CD14-positive monocyte (primary cell): ENCODE measurements at regions of chr2 and their contacts with region 1.

Region 1: GRCh38 chr2:112584134-112584890 is at the start of gene CHCHD5:
- DNase-seq: peak; percentile 95 to 98 (median 98)
- H3K4me3 ChIP-seq: peak within 1 kb of the TSS; percentile 44 to 80 (median 70)
- H3K4me3 Mint-ChIP-seq: peak within 1 kb of the TSS; percentile 92 to 97
- H3K27ac ChIP-seq: peak within 1 kb of the TSS; percentile 89 to 99
- H3K27ac Mint-ChIP-seq: peak within 1 kb of the TSS; percentile 97 to 100 (median 99)
- H3K4me1 ChIP-seq: peaks cover 24 to 27% of the 10 kb centered on the region in 2 donors
- H3K4me1 Mint-ChIP-seq: peaks cover 44% of the 10 kb centered on the region
- H3K27me3 ChIP-seq: no peaks in the 10 kb centered on the region
- H3K27me3 Mint-ChIP-seq: peaks cover 0 to 3% (median 0%) of the 10 kb centered on the region in 3 donors
- CTCF ChIP-seq: no peak
- polyA plus RNA-seq, gene CHCHD5: 37.1 to 77.3 (median 56.2) TPM

Region 2: GRCh38 chr2:112481050-112481527 is 103.2 kb before region 1 on chr2:
- intact Hi-C with region 1: loop called in 1 of 2 experiments (anchors 5 kb)
- DNase-seq: peak; percentile 67 to 74 (median 69)
- H3K4me3 ChIP-seq: peak overlapping the region; percentile 59 to 90 (median 68)
- H3K4me3 Mint-ChIP-seq: peak overlapping the region; percentile 99
- H3K27ac ChIP-seq: peak overlapping the region; percentile 80 to 89
- H3K27ac Mint-ChIP-seq: peak overlapping the region; percentile 91 to 98 (median 96)
- H3K4me1 ChIP-seq: peaks cover 21 to 31% of the 10 kb centered on the region in 2 donors
- H3K4me1 Mint-ChIP-seq: peaks cover 32% of the 10 kb centered on the region
- H3K27me3 ChIP-seq: no peaks in the 10 kb centered on the region
- H3K27me3 Mint-ChIP-seq: peaks cover 0 to 5% (median 3%) of the 10 kb centered on the region in 3 donors
- CTCF ChIP-seq: peak; percentile 82

Region 3: DNA sequence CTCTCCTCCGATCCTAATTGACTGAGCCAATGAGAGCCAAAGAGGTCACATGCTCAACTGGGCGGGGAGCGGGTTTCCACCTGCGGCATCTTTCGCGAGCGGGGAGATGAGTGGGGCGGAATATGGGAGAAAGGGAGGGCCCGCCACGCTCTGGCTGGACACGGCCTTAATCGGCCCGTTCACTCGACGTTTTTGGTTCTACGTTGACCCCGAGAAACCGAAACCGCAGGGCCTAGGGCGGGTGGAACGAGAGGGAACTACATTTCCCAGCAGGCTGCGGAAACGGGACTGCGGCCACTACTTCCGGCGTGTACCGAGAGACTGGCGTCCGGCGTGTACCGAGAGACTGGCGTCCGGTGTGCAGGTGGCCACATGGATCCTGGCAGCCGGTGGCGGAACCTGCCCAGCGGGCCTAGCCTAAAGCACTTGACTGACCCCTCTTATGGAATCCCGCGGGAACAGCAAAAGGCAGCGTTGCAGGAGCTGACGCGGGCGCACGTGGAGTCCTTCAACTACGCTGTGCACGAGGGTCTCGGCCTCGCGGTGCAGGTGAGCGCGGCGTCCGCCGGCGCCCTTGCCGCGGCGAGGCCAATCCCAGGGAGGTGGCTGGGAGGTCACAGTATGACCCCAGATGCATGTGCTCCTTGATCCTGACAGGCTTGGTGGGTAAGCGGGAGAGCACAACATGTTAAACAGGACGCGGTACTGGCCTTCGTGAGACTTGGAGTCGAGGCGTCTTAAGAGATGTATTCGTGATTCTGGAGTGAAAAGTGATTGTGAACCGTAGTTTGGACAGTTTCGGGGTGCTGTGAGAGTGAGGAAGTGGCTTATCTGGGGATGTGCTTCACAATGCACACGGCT is 42.0 kb before region 1 on chr2 and contains the start of gene POLR1B:
- intact Hi-C with region 1: loop called in 1 of 2 experiments (anchors 2 kb)
- DNase-seq: peak; percentile 70 to 71 (median 71)
- H3K4me3 ChIP-seq: peak within 1 kb of the TSS; percentile 60 to 95 (median 94)
- H3K4me3 Mint-ChIP-seq: no peak within 1 kb of the TSS
- H3K27ac ChIP-seq: peak within 1 kb of the TSS; percentile 93 to 95
- H3K27ac Mint-ChIP-seq: peak within 1 kb of the TSS in 1 of 7 donors; percentile 99
- H3K4me1 ChIP-seq: peaks cover 21 to 27% of the 10 kb centered on the region in 2 donors
- H3K4me1 Mint-ChIP-seq: peaks cover 13% of the 10 kb centered on the region
- H3K27me3 ChIP-seq: no peaks in the 10 kb centered on the region
- H3K27me3 Mint-ChIP-seq: peaks cover 0 to 4% (median 0%) of the 10 kb centered on the region in 3 donors
- CTCF ChIP-seq: no peak
- polyA plus RNA-seq, gene POLR1B: 5.2 to 6.3 (median 5.3) TPM

Region 4: GRCh38 chr2:112606488-112606902 is 22.2 kb after region 1 on chr2:
- intact Hi-C with region 1: no loop called
- DNase-seq: no peak
- H3K4me3 ChIP-seq: no peak overlapping the region
- H3K4me3 Mint-ChIP-seq: no peak overlapping the region
- H3K27ac ChIP-seq: no peak overlapping the region
- H3K27ac Mint-ChIP-seq: no peak overlapping the region
- H3K4me1 ChIP-seq: no peaks in the 10 kb centered on the region
- H3K4me1 Mint-ChIP-seq: no peaks in the 10 kb centered on the region
- H3K27me3 ChIP-seq: no peaks in the 10 kb centered on the region
- H3K27me3 Mint-ChIP-seq: peaks cover 0 to 2% (median 0%) of the 10 kb centered on the region in 3 donors
- CTCF ChIP-seq: no peak

Region 5: DNA sequence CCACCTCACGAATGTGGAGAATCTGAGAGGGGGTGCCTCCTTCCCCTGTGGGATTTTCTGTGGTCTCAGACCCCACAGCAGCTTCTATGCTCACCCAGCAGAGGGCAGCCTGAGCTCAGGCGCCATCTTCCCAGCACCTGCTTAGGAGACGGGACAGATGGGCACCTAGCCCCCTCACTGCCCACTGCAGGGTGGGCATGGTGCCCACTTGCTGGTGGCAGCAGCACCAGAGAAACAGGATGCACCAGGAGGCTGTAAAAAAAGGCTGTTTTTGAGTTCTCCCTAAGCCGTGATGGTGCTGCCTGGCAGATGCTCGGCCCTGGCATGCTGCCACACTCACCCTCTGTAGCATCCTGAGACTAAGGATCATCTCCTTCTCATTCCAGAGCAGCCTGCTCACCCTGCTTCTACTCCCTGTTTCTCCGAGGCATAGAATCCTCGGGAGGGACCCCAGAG is 42.3 kb after region 1 on chr2:
- intact Hi-C with region 1: no loop called
- DNase-seq: peak in 2 of 3 donors; percentile 53 to 55
- H3K4me3 ChIP-seq: peak overlapping the region in 1 of 3 experiments; percentile 62
- H3K4me3 Mint-ChIP-seq: peak overlapping the region; percentile 59 to 71
- H3K27ac ChIP-seq: peak overlapping the region; percentile 70 to 89
- H3K27ac Mint-ChIP-seq: peak overlapping the region; percentile 79 to 96 (median 90)
- H3K4me1 ChIP-seq: peaks cover 79 to 91% of the 10 kb centered on the region in 2 donors
- H3K4me1 Mint-ChIP-seq: peaks cover 83% of the 10 kb centered on the region
- H3K27me3 ChIP-seq: no peaks in the 10 kb centered on the region
- H3K27me3 Mint-ChIP-seq: peaks cover 0 to 1% (median 0%) of the 10 kb centered on the region in 3 donors
- CTCF ChIP-seq: peak; percentile 85

Region 6: DNA sequence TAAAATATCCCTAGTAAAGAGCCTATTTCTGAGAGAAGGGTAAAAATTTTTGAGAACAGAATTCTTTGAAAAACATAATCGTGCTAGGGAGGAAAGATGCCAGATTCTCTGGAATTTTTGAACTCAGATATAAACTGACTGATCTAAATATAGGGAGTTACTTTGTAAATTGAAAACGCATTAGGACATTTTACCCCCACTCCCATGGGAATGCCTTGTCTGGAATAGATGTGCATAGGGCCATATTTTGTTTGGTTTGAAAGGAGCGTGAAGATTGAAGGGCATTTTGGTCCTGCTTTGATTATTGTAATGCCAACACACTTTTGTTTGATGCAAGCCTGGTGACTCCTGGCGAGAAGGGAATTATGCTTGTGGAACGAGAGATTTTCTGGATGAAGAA is 1699.5 kb after region 1 on chr2:
- intact Hi-C with region 1: no loop called
- DNase-seq: no peak
- H3K4me3 ChIP-seq: no peak overlapping the region
- H3K4me3 Mint-ChIP-seq: no peak overlapping the region
- H3K27ac ChIP-seq: no peak overlapping the region
- H3K27ac Mint-ChIP-seq: no peak overlapping the region
- H3K4me1 ChIP-seq: no peaks in the 10 kb centered on the region
- H3K4me1 Mint-ChIP-seq: no peaks in the 10 kb centered on the region
- H3K27me3 ChIP-seq: no peaks in the 10 kb centered on the region
- H3K27me3 Mint-ChIP-seq: no peaks in the 10 kb centered on the region
- CTCF ChIP-seq: no peak